ENCODE measurements at regions of chr21 and their contacts with region 1.

Region 1: DNA sequence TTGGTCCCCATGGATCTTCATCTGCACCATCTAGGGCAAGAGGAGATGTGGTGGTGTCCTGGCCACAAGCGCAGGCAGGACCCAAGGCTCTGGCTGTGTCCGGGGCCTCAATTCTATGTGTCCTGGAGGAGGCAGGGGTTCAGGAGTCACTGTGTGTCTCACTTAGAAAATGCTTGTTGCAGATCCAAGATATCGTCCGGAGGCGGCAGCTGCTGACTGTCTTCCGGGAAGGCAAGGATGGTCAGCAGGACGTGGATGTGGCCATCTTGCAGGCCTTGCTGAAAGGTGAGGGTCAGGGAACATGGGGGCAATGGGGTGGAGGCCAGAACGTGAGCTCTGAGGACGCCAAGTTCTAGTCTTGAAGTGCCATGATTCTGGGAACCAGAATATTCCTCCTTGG is 29.1 kb downstream of the TRPM2 start:
- DNase-seq: no peak
- ATAC-seq: no peak
- H3K4me3 Mint-ChIP-seq: no peak overlapping the region
- H3K27ac Mint-ChIP-seq: no peak overlapping the region
- H3K4me1 Mint-ChIP-seq: no peaks in the 10 kb centered on the region
- H3K27me3 Mint-ChIP-seq: peaks cover 2% of the 10 kb centered on the region
- CTCF ChIP-seq: no peak

Region 2: GRCh38 chr21:44397431-44398031 is 15.0 kb after region 1 on chr21:
- CTCF ChIA-PET with region 1: no interaction called
- POLR2A ChIA-PET with region 1: no interaction called
- intact Hi-C with region 1: no loop called
- DNase-seq: no peak
- ATAC-seq: no peak
- H3K4me3 Mint-ChIP-seq: no peak overlapping the region
- H3K27ac Mint-ChIP-seq: no peak overlapping the region
- H3K4me1 Mint-ChIP-seq: no peaks in the 10 kb centered on the region
- H3K27me3 Mint-ChIP-seq: no peaks in the 10 kb centered on the region
- CTCF ChIP-seq: no peak

Region 3: GRCh38 chr21:45747802-45748445 is 1365.4 kb after region 1 on chr21:
- CTCF ChIA-PET with region 1: no interaction called
- POLR2A ChIA-PET with region 1: interaction called, 14 read pairs
- intact Hi-C with region 1: no loop called
- DNase-seq: no peak
- ATAC-seq: no peak
- H3K4me3 Mint-ChIP-seq: no peak overlapping the region
- H3K27ac Mint-ChIP-seq: no peak overlapping the region
- H3K4me1 Mint-ChIP-seq: no peaks in the 10 kb centered on the region
- H3K27me3 Mint-ChIP-seq: no peaks in the 10 kb centered on the region
- CTCF ChIP-seq: no peak

Measured in activated B cell treated with CpG ODN at 0.5 μM for 24 hours (primary cell).